Endothelial cell of umbilical vein (primary cell): ENCODE measurements at regions of chr5 and their contacts with region 1.

Region 1: GRCh38 chr5:141412854-141413539 is at the start of gene PCDHGA10:
- DNase-seq: peak; percentile 72
- H3K4me3 ChIP-seq: peak within 1 kb of the TSS; percentile 14 to 72 (median 34)
- H3K27ac ChIP-seq: no peak within 1 kb of the TSS
- H3K4me1 ChIP-seq: peaks cover 6% of the 10 kb centered on the region
- H3K27me3 ChIP-seq: peaks cover 48 to 84% of the 10 kb centered on the region in 2 experiments
- CTCF ChIP-seq: peak; percentile 58 to 76
- POLR2A ChIP-seq: no peak
- total RNA-seq, gene PCDHGA10: 4.4 and 5.8 TPM in 2 replicates

Region 2: GRCh38 chr5:141338538-141339306 is 74.3 kb before region 1 on chr5 and contains the start of gene PCDHGA2:
- CTCF ChIA-PET with region 1: interaction called, 11 read pairs
- POLR2A ChIA-PET with region 1: no interaction called
- dilution Hi-C with region 1: no loop called
- intact Hi-C with region 1: no loop called
- DNase-seq: peak; percentile 59
- H3K4me3 ChIP-seq: peak within 1 kb of the TSS in 2 of 3 experiments; percentile 16 to 53
- H3K27ac ChIP-seq: no peak within 1 kb of the TSS
- H3K4me1 ChIP-seq: no peaks in the 10 kb centered on the region
- H3K27me3 ChIP-seq: peaks cover 15 to 66% of the 10 kb centered on the region in 2 experiments
- CTCF ChIP-seq: peak; percentile 43 to 54
- POLR2A ChIP-seq: no peak
- total RNA-seq, gene PCDHGA2: 0.58 and 1.2 TPM in 2 replicates

Region 3: DNA sequence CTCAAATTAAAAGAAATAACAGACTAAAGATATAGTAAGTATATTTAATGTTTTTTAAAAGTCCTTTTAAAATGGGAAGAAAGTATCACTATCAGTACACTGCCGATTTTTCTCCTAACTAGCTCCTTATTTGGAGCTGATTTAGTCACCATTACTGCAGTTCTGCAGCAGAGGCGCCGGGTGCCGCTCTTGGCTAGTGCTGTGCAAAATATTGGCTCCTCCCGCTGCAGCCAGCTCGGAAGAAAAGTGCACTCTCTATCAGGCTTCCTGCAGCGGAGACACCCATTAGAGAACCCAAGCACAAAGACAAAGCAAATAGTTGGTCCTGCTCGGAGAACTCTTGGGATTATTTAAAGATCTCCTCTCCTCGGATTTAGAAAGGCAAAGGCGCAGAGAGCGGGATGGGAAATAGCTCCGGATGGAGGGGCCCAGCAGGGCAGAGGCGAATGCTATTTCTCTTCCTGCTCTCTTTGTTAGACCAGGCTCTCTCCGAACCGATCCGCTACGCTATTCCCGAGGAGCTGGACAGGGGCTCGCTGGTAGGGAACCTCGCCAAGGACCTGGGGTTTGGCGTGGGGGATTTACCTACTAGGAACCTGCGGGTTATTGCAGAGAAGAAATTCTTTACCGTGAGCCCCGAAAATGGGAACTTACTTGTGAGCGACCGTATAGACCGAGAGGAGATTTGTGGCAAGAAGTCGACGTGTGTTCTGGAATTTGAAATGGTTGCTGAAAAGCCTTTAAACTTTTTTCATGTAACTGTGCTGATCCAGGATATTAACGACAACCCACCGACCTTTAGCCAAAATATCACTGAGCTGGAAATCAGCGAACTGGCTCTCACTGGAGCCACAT is 42.8 kb before region 1 on chr5 and contains the start of gene PCDHGB3:
- CTCF ChIA-PET with region 1: interaction called, 26 read pairs
- POLR2A ChIA-PET with region 1: no interaction called
- dilution Hi-C with region 1: no loop called
- intact Hi-C with region 1: no loop called
- DNase-seq: peak; percentile 40
- H3K4me3 ChIP-seq: peak within 1 kb of the TSS in 1 of 3 experiments; percentile 23
- H3K27ac ChIP-seq: no peak within 1 kb of the TSS
- H3K4me1 ChIP-seq: no peaks in the 10 kb centered on the region
- H3K27me3 ChIP-seq: peaks cover 40 to 91% of the 10 kb centered on the region in 2 experiments
- CTCF ChIP-seq: peak in 1 of 2 donors; percentile 24
- POLR2A ChIP-seq: no peak
- total RNA-seq, gene PCDHGB3: 1.7 and 2.0 TPM in 2 replicates

Region 4: DNA sequence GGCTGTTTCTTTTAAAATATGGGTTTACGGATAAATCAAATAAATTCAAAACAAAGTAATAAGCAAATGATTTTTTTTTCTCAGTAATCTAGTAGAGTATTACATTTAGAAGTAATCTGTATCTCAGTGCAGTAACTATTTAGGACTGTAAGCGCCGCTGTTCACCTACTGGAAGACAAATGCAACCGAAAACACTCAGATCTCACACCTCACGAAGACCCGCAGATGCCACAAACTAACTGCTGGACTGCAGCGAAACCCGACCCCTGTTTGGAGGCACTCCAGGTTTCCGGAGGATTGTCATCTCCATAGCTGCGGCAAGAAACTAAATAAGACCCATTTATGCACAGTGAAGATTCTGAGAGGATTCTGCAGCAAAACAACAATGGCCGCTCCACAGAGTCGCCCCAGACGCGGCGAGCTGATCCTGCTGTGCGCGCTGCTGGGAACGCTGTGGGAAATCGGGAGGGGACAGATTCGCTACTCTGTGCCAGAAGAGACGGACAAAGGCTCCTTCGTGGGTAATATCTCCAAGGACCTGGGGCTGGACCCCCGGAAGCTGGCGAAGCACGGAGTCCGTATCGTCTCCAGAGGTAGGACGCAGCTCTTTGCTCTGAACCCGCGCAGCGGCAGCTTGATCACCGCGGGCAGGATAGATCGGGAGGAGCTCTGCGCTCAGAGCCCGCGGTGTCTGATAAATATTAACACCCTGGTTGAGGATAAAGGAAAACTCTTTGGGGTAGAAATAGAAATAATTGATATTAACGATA is 20.4 kb before region 1 on chr5 and contains the start of gene PCDHGA8:
- CTCF ChIA-PET with region 1: interaction called, 18 read pairs
- POLR2A ChIA-PET with region 1: no interaction called
- dilution Hi-C with region 1: no loop called
- intact Hi-C with region 1: no loop called
- DNase-seq: no peak
- H3K4me3 ChIP-seq: no peak within 1 kb of the TSS
- H3K27ac ChIP-seq: no peak within 1 kb of the TSS
- H3K4me1 ChIP-seq: no peaks in the 10 kb centered on the region
- H3K27me3 ChIP-seq: peaks cover 28 to 76% of the 10 kb centered on the region in 2 experiments
- CTCF ChIP-seq: peak in 1 of 2 donors; percentile 18
- POLR2A ChIP-seq: no peak
- total RNA-seq, gene PCDHGA8: 0.53 and 0.95 TPM in 2 replicates

Region 5: DNA sequence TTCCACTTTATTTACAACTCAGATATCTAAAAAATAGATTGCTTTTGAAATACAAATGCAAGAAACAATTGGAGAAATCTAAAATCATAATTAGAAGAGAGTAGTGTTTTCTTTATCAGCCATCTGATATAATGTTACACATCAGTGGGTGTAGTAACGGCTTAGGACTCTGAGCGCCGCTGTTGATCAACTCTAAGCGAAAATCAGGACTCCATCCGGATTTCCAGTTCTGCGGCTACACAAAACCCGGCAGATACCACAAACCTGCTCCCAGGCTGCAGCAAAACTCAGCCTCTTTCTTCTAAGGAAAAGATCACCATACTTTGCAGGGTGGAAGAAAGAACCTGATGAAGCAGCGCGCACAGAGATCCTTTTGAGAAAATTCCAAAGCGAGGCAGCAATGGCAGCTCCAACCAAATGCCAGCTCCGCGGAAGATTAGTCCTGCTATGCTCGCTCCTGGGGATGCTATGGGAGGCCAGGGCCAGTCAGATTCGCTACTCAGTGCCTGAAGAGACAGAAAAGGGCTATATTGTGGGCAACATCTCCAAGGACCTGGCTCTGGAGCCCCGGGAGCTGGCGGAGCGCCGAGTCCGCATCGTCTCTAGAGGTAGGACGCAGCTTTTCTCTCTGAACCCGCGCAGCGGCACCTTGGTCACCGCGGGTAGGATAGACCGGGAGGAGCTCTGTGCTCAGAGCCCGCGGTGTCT is 10.3 kb before region 1 on chr5 and contains the start of gene PCDHGA9:
- CTCF ChIA-PET with region 1: interaction called, 18 read pairs
- POLR2A ChIA-PET with region 1: no interaction called
- dilution Hi-C with region 1: no loop called
- intact Hi-C with region 1: no loop called
- DNase-seq: no peak
- H3K4me3 ChIP-seq: peak within 1 kb of the TSS in 2 of 3 experiments; percentile 9 to 28
- H3K27ac ChIP-seq: no peak within 1 kb of the TSS
- H3K4me1 ChIP-seq: peaks cover 2% of the 10 kb centered on the region
- H3K27me3 ChIP-seq: peaks cover 47 to 68% of the 10 kb centered on the region in 2 experiments
- CTCF ChIP-seq: peak; percentile 37 to 57
- POLR2A ChIP-seq: no peak
- total RNA-seq, gene PCDHGA9: 3.5 and 3.9 TPM in 2 replicates

Region 6: GRCh38 chr5:141524604-141525597 is 111.9 kb after region 1 on chr5:
- CTCF ChIA-PET with region 1: interaction called, 17 read pairs
- POLR2A ChIA-PET with region 1: interaction called, 3 read pairs
- dilution Hi-C with region 1: no loop called
- intact Hi-C with region 1: loop called (anchors 1 kb)
- DNase-seq: peak; percentile 96
- H3K4me3 ChIP-seq: no peak overlapping the region
- H3K27ac ChIP-seq: peak overlapping the region; percentile 22
- H3K4me1 ChIP-seq: peaks cover 29% of the 10 kb centered on the region
- H3K27me3 ChIP-seq: no peaks in the 10 kb centered on the region
- CTCF ChIP-seq: peak; percentile 99 to 100
- POLR2A ChIP-seq: no peak

Region 7: GRCh38 chr5:141618804-141619554 is 206.0 kb after region 1 on chr5 and contains the start of gene DIAPH1:
- CTCF ChIA-PET with region 1: no interaction called
- POLR2A ChIA-PET with region 1: no interaction called
- dilution Hi-C with region 1: no loop called
- intact Hi-C with region 1: loop called (anchors 1 kb)
- DNase-seq: peak; percentile 95
- H3K4me3 ChIP-seq: peak within 1 kb of the TSS; percentile 77 to 84 (median 80)
- H3K27ac ChIP-seq: peak within 1 kb of the TSS; percentile 22
- H3K4me1 ChIP-seq: peaks cover 18% of the 10 kb centered on the region
- H3K27me3 ChIP-seq: no peaks in the 10 kb centered on the region
- CTCF ChIP-seq: peak; percentile 98 to 99
- POLR2A ChIP-seq: peak; percentile 77
- total RNA-seq, gene DIAPH1: 103 and 105 TPM in 2 replicates